ENCODE measurements at regions of chr4 and their contacts with region 1.

Region 1: GRCh38 chr4:168475745-168476144 is 4.5 kb downstream of the DDX60L start:
- DNase-seq: no peak
- H3K4me3 ChIP-seq: no peak overlapping the region
- H3K27ac ChIP-seq: no peak overlapping the region
- H3K4me1 ChIP-seq: no peaks in the 10 kb centered on the region; the same call in 1 of the 2 replicates
- H3K27me3 ChIP-seq: no peaks in the 10 kb centered on the region
- CTCF ChIP-seq: no peak

Region 2: GRCh38 chr4:166688835-166689234 is 1786.9 kb before region 1 on chr4:
- CTCF ChIA-PET with region 1: no interaction called
- POLR2A ChIA-PET with region 1: no interaction called
- intact Hi-C with region 1: no loop called
- DNase-seq: no peak
- H3K4me3 ChIP-seq: no peak overlapping the region
- H3K27ac ChIP-seq: no peak overlapping the region
- H3K4me1 ChIP-seq: no peaks in the 10 kb centered on the region
- H3K27me3 ChIP-seq: no peaks in the 10 kb centered on the region
- CTCF ChIP-seq: no peak

Region 3: GRCh38 chr4:168241953-168242352 is 233.8 kb before region 1 on chr4:
- CTCF ChIA-PET with region 1: no interaction called
- POLR2A ChIA-PET with region 1: no interaction called
- intact Hi-C with region 1: no loop called
- DNase-seq: no peak
- H3K4me3 ChIP-seq: no peak overlapping the region
- H3K27ac ChIP-seq: no peak overlapping the region
- H3K4me1 ChIP-seq: no peaks in the 10 kb centered on the region
- H3K27me3 ChIP-seq: no peaks in the 10 kb centered on the region
- CTCF ChIP-seq: no peak

Region 4: GRCh38 chr4:168318266-168318895 is 157.4 kb before region 1 on chr4 and contains the start of gene DDX60:
- CTCF ChIA-PET with region 1: no interaction called
- POLR2A ChIA-PET with region 1: interaction called, 4 read pairs
- intact Hi-C with region 1: loop called (anchors 5 kb)
- DNase-seq: peak; percentile 47 to 70
- H3K4me3 ChIP-seq: peak within 1 kb of the TSS; percentile 95
- H3K27ac ChIP-seq: peak within 1 kb of the TSS; percentile 73
- H3K4me1 ChIP-seq: peaks cover 11% of the 10 kb centered on the region; the same call in 1 of the 2 replicates
- H3K27me3 ChIP-seq: no peaks in the 10 kb centered on the region
- CTCF ChIP-seq: no peak
- total RNA-seq, gene DDX60: 9.1 and 12.2 TPM in 2 replicates

Region 5: GRCh38 chr4:168451744-168452390 is 23.9 kb before region 1 on chr4:
- CTCF ChIA-PET with region 1: no interaction called
- POLR2A ChIA-PET with region 1: interaction called, 11 read pairs
- intact Hi-C with region 1: no loop called
- DNase-seq: peak in 1 of 2 experiments; percentile 64
- H3K4me3 ChIP-seq: no peak overlapping the region
- H3K27ac ChIP-seq: no peak overlapping the region
- H3K4me1 ChIP-seq: peaks cover 15% of the 10 kb centered on the region
- H3K27me3 ChIP-seq: no peaks in the 10 kb centered on the region
- CTCF ChIP-seq: no peak

Region 6: DNA sequence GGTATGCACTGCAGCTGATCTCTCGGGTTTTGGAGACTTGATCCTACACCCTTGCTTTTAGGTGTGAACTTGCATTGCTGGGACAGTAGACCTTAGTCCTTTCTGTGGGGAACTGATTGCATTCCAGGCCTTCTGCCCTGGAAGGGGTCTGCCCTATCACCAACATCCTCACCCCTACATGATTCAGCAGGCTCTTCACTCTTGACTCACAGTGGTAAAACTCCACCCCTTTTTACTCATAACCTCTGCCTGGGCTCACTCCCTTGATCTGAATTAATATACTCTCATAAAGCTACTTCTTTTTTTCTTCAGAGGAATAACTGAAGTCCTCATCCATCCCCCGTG is 11.2 kb after region 1 on chr4:
- CTCF ChIA-PET with region 1: no interaction called
- POLR2A ChIA-PET with region 1: interaction called, 25 read pairs
- intact Hi-C with region 1: no loop called
- DNase-seq: peak in 1 of 2 experiments; percentile 78
- H3K4me3 ChIP-seq: peak overlapping the region; percentile 23; the same call in 1 of the 2 replicates
- H3K27ac ChIP-seq: peak overlapping the region; percentile 92
- H3K4me1 ChIP-seq: peaks cover 55% of the 10 kb centered on the region
- H3K27me3 ChIP-seq: no peaks in the 10 kb centered on the region
- CTCF ChIP-seq: no peak

Region 7: GRCh38 chr4:168666531-168666930 is 190.8 kb after region 1 on chr4:
- CTCF ChIA-PET with region 1: no interaction called
- POLR2A ChIA-PET with region 1: no interaction called
- intact Hi-C with region 1: no loop called
- DNase-seq: peak in 1 of 2 experiments; percentile 35
- H3K4me3 ChIP-seq: no peak overlapping the region
- H3K27ac ChIP-seq: no peak overlapping the region
- H3K4me1 ChIP-seq: peaks cover 12% of the 10 kb centered on the region
- H3K27me3 ChIP-seq: no peaks in the 10 kb centered on the region
- CTCF ChIP-seq: no peak

Region 8: DNA sequence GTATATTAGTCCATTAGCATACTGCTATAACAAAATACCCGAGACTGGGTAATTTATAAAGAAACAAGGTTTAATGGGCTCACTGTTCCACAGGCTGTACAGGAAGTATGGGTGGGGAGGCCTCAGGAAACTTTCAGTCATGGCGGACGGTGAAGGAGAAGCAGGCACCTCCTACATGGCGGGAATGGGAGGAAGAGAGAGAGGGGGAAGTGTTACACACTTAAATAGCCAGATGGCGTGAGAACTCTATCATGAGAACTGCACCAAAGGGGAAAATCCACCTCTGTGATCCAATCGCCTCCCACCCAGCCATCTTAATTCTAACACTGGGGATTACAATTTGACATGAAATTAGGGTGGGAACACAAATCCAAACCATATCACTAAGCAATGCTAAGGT is 893.9 kb after region 1 on chr4:
- CTCF ChIA-PET with region 1: no interaction called
- POLR2A ChIA-PET with region 1: no interaction called
- intact Hi-C with region 1: no loop called
- DNase-seq: no peak
- H3K4me3 ChIP-seq: no peak overlapping the region
- H3K27ac ChIP-seq: no peak overlapping the region
- H3K4me1 ChIP-seq: no peaks in the 10 kb centered on the region
- H3K27me3 ChIP-seq: no peaks in the 10 kb centered on the region
- CTCF ChIP-seq: no peak

Measured in PC-9 (cell line).